PC-3 (cell line): ENCODE measurements at regions of chr3 and their contacts with region 1.

Region 1: GRCh38 chr3:30730967-30731463 is 124.6 kb downstream of the TGFBR2 start:
- DNase-seq: no peak
- ATAC-seq: no peak
- H3K4me3 ChIP-seq: no peak overlapping the region
- H3K27ac ChIP-seq: no peak overlapping the region
- H3K4me1 ChIP-seq: peaks cover 14% of the 10 kb centered on the region
- H3K27me3 ChIP-seq: no peaks in the 10 kb centered on the region
- CTCF ChIP-seq: no peak

Region 2: DNA sequence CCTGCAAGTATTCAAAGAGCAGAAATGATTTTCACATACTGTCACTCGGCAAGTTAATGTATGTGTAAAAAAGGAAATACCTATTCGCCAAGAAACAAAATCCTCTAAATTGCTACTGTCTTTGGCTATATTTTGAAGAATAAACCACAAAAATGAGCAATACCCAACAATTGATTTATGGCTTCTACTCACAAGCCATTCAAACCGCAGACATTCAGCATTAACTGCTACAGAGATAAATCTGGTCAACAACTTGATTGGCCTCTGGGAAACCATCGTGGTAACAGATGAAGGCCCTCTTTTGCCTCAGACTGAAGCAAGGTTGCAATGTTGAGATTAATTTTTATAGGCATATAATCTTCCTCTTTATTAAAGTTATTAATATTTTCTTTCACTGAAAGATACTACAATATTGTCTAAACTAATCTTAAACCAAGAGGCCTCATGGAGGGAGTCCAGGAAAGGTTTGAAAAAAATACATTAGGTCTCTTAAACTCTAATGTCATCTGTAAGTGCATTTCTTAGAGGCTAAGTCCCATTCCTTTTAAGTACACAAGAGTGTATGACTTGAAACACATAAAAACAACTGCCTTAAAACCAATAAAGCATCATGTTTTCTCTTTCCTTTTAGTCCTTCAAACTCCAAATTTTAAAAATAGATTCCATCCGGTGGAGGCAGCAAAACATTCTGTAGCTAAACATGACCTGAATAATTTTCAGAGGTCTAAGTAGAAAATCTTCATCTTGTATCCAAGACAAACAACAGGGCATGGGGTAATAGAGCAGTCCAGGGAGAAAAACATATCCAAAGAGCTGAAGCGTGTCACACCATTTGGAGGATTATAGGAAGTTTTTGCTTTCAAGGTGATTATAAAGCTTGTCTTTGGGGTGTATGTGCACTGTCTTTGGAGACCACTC is 287.0 kb before region 1 on chr3:
- CTCF ChIA-PET with region 1: no interaction called
- POLR2A ChIA-PET with region 1: interaction called, 13 read pairs
- intact Hi-C with region 1: no loop called
- DNase-seq: no peak
- ATAC-seq: no peak
- H3K4me3 ChIP-seq: no peak overlapping the region
- H3K27ac ChIP-seq: no peak overlapping the region
- H3K4me1 ChIP-seq: peaks cover 21% of the 10 kb centered on the region
- H3K27me3 ChIP-seq: no peaks in the 10 kb centered on the region
- CTCF ChIP-seq: no peak

Region 3: GRCh38 chr3:30639937-30640336 is 91.1 kb before region 1 on chr3:
- CTCF ChIA-PET with region 1: no interaction called
- POLR2A ChIA-PET with region 1: no interaction called
- intact Hi-C with region 1: no loop called
- DNase-seq: no peak
- ATAC-seq: no peak
- H3K4me3 ChIP-seq: no peak overlapping the region
- H3K27ac ChIP-seq: no peak overlapping the region
- H3K4me1 ChIP-seq: no peaks in the 10 kb centered on the region
- H3K27me3 ChIP-seq: no peaks in the 10 kb centered on the region
- CTCF ChIP-seq: no peak

Region 4: DNA sequence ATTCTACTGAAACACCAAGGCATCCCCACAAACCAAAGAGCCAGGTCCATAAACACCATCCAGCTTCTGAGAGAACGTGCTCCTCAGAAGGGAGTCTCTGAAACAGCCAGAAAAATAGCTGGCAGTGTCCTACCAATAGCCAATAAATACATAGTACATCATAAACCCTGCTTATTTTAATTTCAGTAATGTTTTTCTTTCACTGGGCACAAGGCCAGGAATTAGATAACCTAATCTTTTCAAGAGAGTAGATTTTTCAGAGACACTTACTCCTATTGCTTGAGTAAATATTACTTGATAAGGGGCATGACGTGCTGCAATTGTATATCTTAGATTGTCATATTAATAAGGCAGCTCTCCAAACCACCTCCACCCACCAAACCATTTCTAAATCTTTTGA is 140.7 kb after region 1 on chr3:
- CTCF ChIA-PET with region 1: no interaction called
- POLR2A ChIA-PET with region 1: no interaction called
- intact Hi-C with region 1: no loop called
- DNase-seq: no peak
- ATAC-seq: no peak
- H3K4me3 ChIP-seq: no peak overlapping the region
- H3K27ac ChIP-seq: no peak overlapping the region
- H3K4me1 ChIP-seq: no peaks in the 10 kb centered on the region
- H3K27me3 ChIP-seq: no peaks in the 10 kb centered on the region
- CTCF ChIP-seq: no peak

Region 5: GRCh38 chr3:31010491-31010890 is 279.5 kb after region 1 on chr3:
- CTCF ChIA-PET with region 1: no interaction called
- POLR2A ChIA-PET with region 1: no interaction called
- intact Hi-C with region 1: no loop called
- DNase-seq: peak; percentile 58
- ATAC-seq: 0 out of 2 replicates have a peak, but pooled peaks have one; percentile 15
- H3K4me3 ChIP-seq: no peak overlapping the region
- H3K27ac ChIP-seq: peak overlapping the region; percentile 81
- H3K4me1 ChIP-seq: peaks cover 55% of the 10 kb centered on the region
- H3K27me3 ChIP-seq: no peaks in the 10 kb centered on the region
- CTCF ChIP-seq: no peak

Region 6: GRCh38 chr3:32157600-32158264 is 1426.7 kb after region 1 on chr3:
- CTCF ChIA-PET with region 1: no interaction called
- POLR2A ChIA-PET with region 1: no interaction called
- intact Hi-C with region 1: no loop called
- DNase-seq: no peak
- ATAC-seq: no peak
- H3K4me3 ChIP-seq: no peak overlapping the region
- H3K27ac ChIP-seq: no peak overlapping the region
- H3K4me1 ChIP-seq: peaks cover 7% of the 10 kb centered on the region; the same call in 1 of the 2 replicates
- H3K27me3 ChIP-seq: no peaks in the 10 kb centered on the region
- CTCF ChIP-seq: no peak